A549 (cell line): ENCODE measurements at regions of chr11 and their contacts with region 1.

Region 1: DNA sequence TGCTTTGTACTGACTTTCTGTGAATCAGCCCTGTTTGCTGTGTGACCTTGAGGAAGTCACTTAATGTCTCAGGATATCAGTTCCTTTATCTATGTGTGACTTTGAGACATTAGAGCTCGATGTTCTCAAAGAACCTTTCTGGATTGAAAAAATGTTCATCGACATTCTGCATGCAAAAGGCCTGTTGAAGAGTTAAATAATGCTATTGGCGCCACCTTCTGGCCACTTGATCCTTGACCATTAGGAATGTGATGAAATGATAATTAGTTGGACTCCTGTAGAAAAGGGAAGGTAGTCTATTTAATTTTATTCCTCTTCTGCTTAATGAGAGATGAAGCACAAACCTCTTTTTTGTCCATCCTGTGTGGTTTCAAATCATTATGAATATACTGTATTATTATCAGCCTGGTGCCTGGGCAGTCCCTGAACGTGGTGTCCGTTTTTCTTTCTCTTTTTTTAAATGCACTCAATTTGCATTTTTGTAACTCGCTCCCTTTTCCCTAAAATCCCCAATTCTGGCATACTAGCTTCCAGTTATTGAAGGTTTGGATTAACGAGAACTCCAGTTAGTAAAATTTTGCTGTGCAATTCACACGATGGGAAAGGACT is 20.7 kb downstream of the ELF5 start:
- DNase-seq: peak; percentile 66 to 75
- ATAC-seq: peak; percentile 51 to 81; a peak in 3 of 6 replicates
- H3K4me3 ChIP-seq: no peak overlapping the region
- H3K27ac ChIP-seq: peak overlapping the region in 1 of 2 experiments; percentile 47; a peak in 3 of 6 replicates
- H3K4me1 ChIP-seq: no peaks in the 10 kb centered on the region
- CTCF ChIP-seq: peak; percentile 90
- EP300 ChIP-seq: no peak
- POLR2A ChIP-seq: no peak
- RAD21 ChIP-seq: peak; percentile 90

Region 2: DNA sequence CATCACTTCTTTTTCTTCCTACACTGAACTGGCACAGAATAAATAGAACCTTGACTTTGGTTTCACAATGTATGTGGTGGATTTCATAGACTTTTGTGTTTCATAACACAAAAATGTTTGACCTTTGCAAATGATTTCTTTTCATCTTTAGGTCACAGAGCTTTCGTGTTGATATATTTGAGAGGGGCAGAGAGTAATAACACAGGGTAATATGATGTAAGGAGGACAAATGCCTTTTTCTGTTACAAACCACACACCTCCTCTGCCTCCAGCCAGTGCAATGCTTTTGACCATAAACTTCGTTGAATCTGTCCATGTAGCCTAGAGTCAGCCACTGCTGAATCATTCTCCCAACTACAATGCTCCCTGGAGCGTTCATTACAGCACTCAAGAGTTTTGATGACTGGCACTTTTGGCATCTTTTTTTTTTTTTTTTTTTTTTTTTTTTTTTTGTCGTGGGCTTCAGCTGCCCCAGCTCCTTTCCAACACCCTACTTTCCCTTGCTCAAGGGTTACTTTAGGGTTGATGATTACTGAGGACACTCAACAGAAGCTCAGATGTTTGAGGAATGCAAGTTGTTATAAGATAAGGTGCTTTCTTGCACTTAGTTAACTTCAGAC is 65.6 kb before region 1 on chr11:
- CTCF ChIA-PET with region 1: interaction called, 13 read pairs
- POLR2A ChIA-PET with region 1: no interaction called
- DNase-seq: peak; percentile 62 to 89
- ATAC-seq: peak; percentile 98 to 99
- H3K4me3 ChIP-seq: no peak overlapping the region
- H3K27ac ChIP-seq: peak overlapping the region; percentile 83 to 88
- H3K4me1 ChIP-seq: peaks cover 41% of the 10 kb centered on the region
- CTCF ChIP-seq: no peak
- EP300 ChIP-seq: peak; percentile 81 to 87; a peak in 4 of 5 replicates
- POLR2A ChIP-seq: no peak
- RAD21 ChIP-seq: 0 out of 5 replicates have a peak, but pooled peaks of 1 of the 2 experiments have one; percentile 12

Region 3: GRCh38 chr11:34468209-34468841 is 24.6 kb before region 1 on chr11:
- CTCF ChIA-PET with region 1: interaction called, 17 read pairs
- POLR2A ChIA-PET with region 1: no interaction called
- DNase-seq: peak in 1 of 2 experiments; percentile 42
- ATAC-seq: no peak
- H3K4me3 ChIP-seq: no peak overlapping the region
- H3K27ac ChIP-seq: no peak overlapping the region
- H3K4me1 ChIP-seq: no peaks in the 10 kb centered on the region
- CTCF ChIP-seq: peak; percentile 44
- EP300 ChIP-seq: no peak
- POLR2A ChIP-seq: no peak
- RAD21 ChIP-seq: peak; percentile 45 to 64; a peak in 4 of 5 replicates

Region 4: DNA sequence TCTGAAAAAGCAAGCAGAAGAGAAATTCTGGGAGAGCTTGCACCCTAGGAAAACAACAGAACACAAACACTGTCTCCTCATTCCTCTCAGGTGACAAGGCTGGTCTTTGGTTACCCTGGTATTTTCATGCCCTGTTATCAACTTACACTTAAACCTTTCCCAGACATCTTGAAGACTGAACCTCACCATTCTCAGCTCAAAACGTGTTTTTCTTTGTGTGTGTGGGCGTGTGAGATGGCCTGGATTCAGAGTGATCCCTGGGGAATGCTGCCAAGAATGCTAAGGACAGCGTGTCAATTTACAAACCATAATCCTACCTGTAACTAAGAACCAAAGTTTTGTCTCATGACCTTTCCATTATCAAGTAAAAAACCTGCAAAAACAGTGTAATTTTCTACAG is 12.6 kb before region 1 on chr11:
- CTCF ChIA-PET with region 1: interaction called, 42 read pairs
- POLR2A ChIA-PET with region 1: no interaction called
- DNase-seq: no peak
- ATAC-seq: no peak
- H3K4me3 ChIP-seq: no peak overlapping the region
- H3K27ac ChIP-seq: no peak overlapping the region
- H3K4me1 ChIP-seq: no peaks in the 10 kb centered on the region
- CTCF ChIP-seq: no peak
- EP300 ChIP-seq: no peak
- POLR2A ChIP-seq: no peak
- RAD21 ChIP-seq: no peak

Region 5: DNA sequence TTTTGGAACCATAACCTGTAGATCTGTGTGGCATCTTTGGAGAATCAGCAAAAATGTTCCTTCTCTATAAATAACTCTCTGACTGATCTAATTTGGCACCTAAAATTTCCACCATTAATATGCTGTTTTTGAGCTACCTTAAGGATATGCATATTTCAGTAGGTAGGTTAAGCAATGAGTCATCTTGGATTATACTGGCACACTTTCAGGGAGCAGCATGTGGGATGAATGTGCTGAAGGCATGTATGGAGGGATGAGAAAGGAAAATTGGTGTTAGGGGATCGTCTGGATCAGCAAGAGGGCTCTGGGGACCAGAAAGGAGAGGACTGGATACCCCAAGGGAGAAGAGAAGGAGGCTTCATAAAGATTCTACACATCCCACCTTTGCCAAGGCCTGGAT is 65.3 kb after region 1 on chr11:
- CTCF ChIA-PET with region 1: no interaction called
- POLR2A ChIA-PET with region 1: no interaction called
- DNase-seq: no peak
- ATAC-seq: no peak
- H3K4me3 ChIP-seq: no peak overlapping the region
- H3K27ac ChIP-seq: no peak overlapping the region
- H3K4me1 ChIP-seq: no peaks in the 10 kb centered on the region
- CTCF ChIP-seq: no peak
- EP300 ChIP-seq: no peak
- POLR2A ChIP-seq: no peak
- RAD21 ChIP-seq: no peak